ENCODE measurements at regions of chr10 and their contacts with region 1.

Region 1: DNA sequence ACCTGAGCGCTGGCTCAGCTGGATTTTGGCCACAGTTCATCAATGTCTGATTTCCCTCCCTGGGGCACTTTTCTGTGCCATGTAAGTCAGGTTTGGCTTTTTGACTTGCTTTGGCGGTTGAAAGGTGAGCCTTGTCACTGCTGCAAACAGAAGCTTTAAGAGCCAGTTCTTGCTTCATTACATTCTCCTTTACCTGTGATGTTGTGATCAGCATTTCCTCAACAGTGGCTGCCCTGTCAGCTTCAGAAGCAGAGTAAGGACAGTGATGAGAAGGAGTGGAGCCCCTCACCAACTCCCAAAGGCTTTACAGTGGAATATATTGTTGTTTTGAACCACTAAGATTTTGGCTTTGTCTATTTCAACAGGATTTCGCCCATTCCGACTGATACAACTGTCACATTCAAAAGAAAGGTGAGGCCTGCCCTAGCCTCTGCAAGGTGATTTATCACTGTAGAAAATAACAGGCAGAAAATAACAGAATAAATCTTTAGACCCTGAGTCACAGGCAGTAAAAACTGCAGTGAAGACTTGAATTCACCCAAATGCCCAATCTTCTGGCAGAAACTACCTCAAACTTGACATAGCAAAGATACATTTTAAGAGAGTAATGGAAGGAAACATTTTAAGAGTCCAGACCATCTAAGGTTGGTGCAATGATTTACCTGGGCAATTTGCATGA is 13.3 kb upstream of the DKK1 start:
- DNase-seq: no peak
- H3K4me3 ChIP-seq: no peak overlapping the region
- CTCF ChIP-seq: no peak
- POLR2A ChIP-seq: no peak

Region 2: DNA sequence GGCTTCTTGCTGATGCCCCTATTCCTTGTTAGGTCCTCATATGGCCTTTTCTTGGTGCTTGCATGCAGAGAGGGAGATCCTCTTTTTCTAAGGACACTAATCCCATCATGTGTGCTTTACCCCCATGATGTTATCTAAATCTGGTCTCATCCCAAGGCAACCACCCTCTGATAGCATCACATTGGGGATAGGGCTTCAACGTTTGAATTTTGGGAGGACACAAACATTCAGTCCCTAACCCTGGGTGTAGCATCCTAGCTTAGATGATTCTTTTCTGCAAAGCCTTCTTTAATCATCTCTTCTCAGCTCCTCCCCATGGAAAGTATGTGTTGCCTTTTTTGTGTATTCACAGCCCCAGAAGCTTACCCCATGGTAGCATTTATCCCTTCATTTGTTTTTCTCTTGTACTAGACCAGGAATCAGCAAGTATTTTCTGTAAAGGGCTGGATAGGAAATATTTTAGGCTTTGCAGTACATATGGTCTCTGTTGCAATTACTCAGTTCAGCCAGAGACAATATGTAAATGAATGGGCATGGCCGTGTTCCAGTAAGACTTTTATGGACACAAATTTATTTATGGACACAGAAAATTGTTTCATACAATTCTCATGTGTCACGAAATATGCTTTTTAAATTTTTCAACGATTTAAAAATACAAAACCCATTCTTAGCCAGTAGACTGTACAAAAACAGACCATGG is 499.9 kb before region 1 on chr10:
- intact Hi-C with region 1: loop called (anchors 5 kb)
- DNase-seq: no peak
- H3K4me3 ChIP-seq: no peak overlapping the region
- CTCF ChIP-seq: no peak
- POLR2A ChIP-seq: no peak

Region 3: GRCh38 chr10:52359441-52359840 is 58.7 kb after region 1 on chr10:
- intact Hi-C with region 1: no loop called
- DNase-seq: no peak
- H3K4me3 ChIP-seq: no peak overlapping the region
- CTCF ChIP-seq: no peak
- POLR2A ChIP-seq: no peak